Right cardiac atrium (tissue), 5 donors: ENCODE measurements at regions of chr17 and their contacts with region 1.

Region 1: DNA sequence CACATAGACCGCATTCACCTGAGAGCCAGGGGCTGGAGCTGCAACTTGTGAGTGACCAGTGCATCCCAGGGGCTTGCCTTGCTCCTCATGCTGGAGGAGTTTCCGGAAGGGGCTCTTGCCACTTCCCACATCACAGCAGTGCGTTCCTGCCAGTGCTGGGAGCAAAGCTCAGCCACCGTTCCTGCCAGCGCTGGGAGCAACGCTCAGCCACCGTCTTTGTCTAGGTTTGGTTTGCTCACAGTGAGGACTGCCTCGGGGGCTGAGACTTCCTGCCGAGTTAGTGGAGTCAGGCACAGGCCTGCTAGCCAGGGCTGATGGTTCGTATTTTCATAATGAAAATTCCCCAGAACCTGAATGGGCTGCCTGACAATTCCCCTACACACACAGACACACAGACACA is 5.4 kb upstream of the CHRNE start:
- DNase-seq: peak in 2 of 3 donors; percentile 62 to 65
- ATAC-seq: peak; percentile 43 to 45
- H3K4me3 ChIP-seq: no peak overlapping the region
- H3K27ac ChIP-seq: peak overlapping the region; percentile 57
- H3K4me1 ChIP-seq: no peaks in the 10 kb centered on the region
- H3K27me3 ChIP-seq: no peaks in the 10 kb centered on the region

Region 2: DNA sequence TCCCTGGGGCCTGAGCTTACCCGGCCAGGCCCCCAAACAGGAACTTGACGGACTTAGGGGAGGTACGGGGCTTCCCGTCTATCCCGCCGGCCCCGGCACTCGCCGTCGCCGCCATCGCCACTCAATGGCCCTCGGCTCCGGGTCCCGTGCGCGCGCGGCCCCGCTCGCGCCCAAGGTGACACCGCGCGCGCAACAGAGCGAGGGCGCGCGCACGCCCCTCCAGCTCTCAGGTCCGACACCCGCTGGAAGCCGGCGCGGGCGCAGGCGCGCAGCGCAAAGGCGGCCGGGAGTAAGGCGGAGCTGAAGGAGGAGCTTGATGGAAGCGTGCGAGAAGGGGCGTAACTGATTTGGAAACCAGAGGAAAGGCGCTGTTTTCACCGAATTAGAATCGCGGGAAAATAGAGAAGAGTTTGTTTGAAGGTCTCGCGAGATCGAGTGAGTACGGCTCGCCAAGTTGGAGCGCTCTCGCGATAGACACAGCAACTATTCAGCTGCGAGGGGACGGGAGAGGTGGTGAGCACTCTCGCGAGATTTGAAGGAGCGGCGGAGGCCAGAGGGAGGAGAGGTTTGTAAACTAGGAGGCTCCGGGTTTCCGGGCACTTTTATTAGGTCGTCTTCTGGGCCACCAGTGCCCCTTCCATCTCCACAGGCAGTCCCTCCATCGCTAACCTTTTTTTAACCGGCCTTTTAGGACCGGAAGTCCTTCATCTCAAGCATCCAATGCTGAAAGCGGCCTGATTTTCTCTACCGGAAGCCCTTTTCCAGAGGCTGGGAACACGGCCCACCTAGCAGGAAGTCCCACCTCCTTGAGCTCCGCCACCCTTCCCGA is 31.7 kb after region 1 on chr17 and contains the starts of genes RNF167 and SLC25A11:
- intact Hi-C with region 1: loop called in 1 of 4 experiments (anchors 5 kb)
- DNase-seq: peak; percentile 96 to 97 (median 97)
- ATAC-seq: peak; percentile 92 to 94
- H3K4me3 ChIP-seq: peak within 1 kb of the TSS; percentile 84
- H3K27ac ChIP-seq: peak within 1 kb of the TSS; percentile 98
- H3K4me1 ChIP-seq: peaks cover 8% of the 10 kb centered on the region
- H3K27me3 ChIP-seq: no peaks in the 10 kb centered on the region
- total RNA-seq, gene RNF167: 76.6 to 108 (median 87.5) TPM
- total RNA-seq, gene SLC25A11: 162 to 230 (median 202) TPM

Region 3: GRCh38 chr17:5055543-5055942 is 147.2 kb after region 1 on chr17:
- intact Hi-C with region 1: loop called in 2 of 4 experiments (anchors 2 to 5 kb)
- DNase-seq: no peak
- ATAC-seq: no peak
- H3K4me3 ChIP-seq: no peak overlapping the region
- H3K27ac ChIP-seq: no peak overlapping the region
- H3K4me1 ChIP-seq: no peaks in the 10 kb centered on the region
- H3K27me3 ChIP-seq: no peaks in the 10 kb centered on the region